SK-N-SH (cell line): ENCODE measurements at regions of chr7 and their contacts with region 1.

Region 1: GRCh38 chr7:4753711-4754432 is 21.6 kb upstream of the AP5Z1 start:
- DNase-seq: peak; percentile 95
- H3K4me3 ChIP-seq: peak overlapping the region in 1 of 2 experiments; percentile 42; a peak in 1 of 4 replicates
- H3K27ac ChIP-seq: no peak overlapping the region
- H3K4me1 ChIP-seq: no peaks in the 10 kb centered on the region; a peak in 1 of 4 replicates
- H3K27me3 ChIP-seq: no peaks in the 10 kb centered on the region
- CTCF ChIP-seq: peak; percentile 98
- EP300 ChIP-seq: no peak
- RAD21 ChIP-seq: peak; percentile 88

Region 2: DNA sequence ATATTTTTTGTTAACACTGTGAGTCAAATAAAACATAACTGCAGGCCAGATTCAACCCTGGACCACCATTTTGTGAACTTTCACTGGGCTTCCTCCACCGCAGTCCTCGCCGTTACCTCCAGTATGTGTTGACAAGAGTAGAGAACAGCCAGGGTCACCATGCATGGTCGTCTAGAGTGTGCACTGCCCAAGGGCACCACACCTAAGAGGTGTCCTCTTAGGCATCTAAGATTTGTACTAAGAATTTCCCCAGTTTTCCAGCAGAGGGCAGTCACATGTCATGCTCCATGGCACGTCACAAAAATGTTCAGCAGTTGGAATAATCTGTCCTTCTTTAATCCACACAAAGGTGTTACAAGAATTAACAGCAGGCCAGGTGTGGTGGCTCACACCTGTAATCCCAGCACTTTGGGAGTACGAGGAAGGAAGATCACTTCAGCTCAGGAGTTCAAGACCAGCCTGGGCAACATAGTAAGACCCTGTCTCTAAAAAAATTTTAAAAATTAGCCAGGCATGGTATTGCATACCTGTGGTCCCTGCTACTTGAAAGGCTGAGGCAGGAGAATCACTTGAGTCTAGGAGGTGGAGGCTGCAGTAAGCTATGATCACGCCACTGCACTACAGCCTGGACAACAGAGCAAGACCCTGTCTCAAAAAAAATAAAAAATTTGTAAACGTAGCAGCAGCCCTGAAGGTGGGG is 143.0 kb before region 1 on chr7:
- CTCF ChIA-PET with region 1: interaction called, 10 read pairs
- POLR2A ChIA-PET with region 1: no interaction called
- DNase-seq: peak; percentile 77
- H3K4me3 ChIP-seq: no peak overlapping the region
- H3K27ac ChIP-seq: no peak overlapping the region
- H3K4me1 ChIP-seq: no peaks in the 10 kb centered on the region
- H3K27me3 ChIP-seq: no peaks in the 10 kb centered on the region
- CTCF ChIP-seq: peak; percentile 93
- EP300 ChIP-seq: no peak
- RAD21 ChIP-seq: peak; percentile 95

Region 3: GRCh38 chr7:4733936-4734528 is 19.8 kb before region 1 on chr7:
- CTCF ChIA-PET with region 1: interaction called, 11 read pairs
- POLR2A ChIA-PET with region 1: no interaction called
- DNase-seq: no peak
- H3K4me3 ChIP-seq: no peak overlapping the region
- H3K27ac ChIP-seq: no peak overlapping the region
- H3K4me1 ChIP-seq: peaks cover 7 to 9% of the 10 kb centered on the region in 2 experiments; a peak in 3 of 4 replicates
- H3K27me3 ChIP-seq: no peaks in the 10 kb centered on the region
- CTCF ChIP-seq: no peak
- EP300 ChIP-seq: no peak
- RAD21 ChIP-seq: no peak

Region 4: GRCh38 chr7:4765776-4766490 is 12.1 kb after region 1 on chr7:
- CTCF ChIA-PET with region 1: interaction called, 11 read pairs
- POLR2A ChIA-PET with region 1: no interaction called
- DNase-seq: no peak
- H3K4me3 ChIP-seq: no peak overlapping the region
- H3K27ac ChIP-seq: no peak overlapping the region
- H3K4me1 ChIP-seq: no peaks in the 10 kb centered on the region
- H3K27me3 ChIP-seq: no peaks in the 10 kb centered on the region
- CTCF ChIP-seq: peak; percentile 22; the same call in 1 of the 2 replicates
- EP300 ChIP-seq: no peak
- RAD21 ChIP-seq: no peak